ENCODE measurements at regions of chr15 and their contacts with region 1.

Region 1: GRCh38 chr15:80776420-80777045 is 2.6 kb upstream of the CEMIP start:
- DNase-seq: peak; percentile 84
- H3K4me3 ChIP-seq: no peak overlapping the region
- H3K27ac ChIP-seq: peak overlapping the region; percentile 66
- H3K4me1 ChIP-seq: peaks cover 11% of the 10 kb centered on the region
- H3K27me3 ChIP-seq: peaks cover 17% of the 10 kb centered on the region
- CTCF ChIP-seq: peak; percentile 84

Region 2: GRCh38 chr15:80567721-80568157 is 208.8 kb before region 1 on chr15:
- intact Hi-C with region 1: loop called (anchors 2 kb)
- DNase-seq: peak; percentile 71
- H3K4me3 ChIP-seq: no peak overlapping the region
- H3K27ac ChIP-seq: no peak overlapping the region
- H3K4me1 ChIP-seq: no peaks in the 10 kb centered on the region
- H3K27me3 ChIP-seq: no peaks in the 10 kb centered on the region
- CTCF ChIP-seq: peak; percentile 56

Region 3: DNA sequence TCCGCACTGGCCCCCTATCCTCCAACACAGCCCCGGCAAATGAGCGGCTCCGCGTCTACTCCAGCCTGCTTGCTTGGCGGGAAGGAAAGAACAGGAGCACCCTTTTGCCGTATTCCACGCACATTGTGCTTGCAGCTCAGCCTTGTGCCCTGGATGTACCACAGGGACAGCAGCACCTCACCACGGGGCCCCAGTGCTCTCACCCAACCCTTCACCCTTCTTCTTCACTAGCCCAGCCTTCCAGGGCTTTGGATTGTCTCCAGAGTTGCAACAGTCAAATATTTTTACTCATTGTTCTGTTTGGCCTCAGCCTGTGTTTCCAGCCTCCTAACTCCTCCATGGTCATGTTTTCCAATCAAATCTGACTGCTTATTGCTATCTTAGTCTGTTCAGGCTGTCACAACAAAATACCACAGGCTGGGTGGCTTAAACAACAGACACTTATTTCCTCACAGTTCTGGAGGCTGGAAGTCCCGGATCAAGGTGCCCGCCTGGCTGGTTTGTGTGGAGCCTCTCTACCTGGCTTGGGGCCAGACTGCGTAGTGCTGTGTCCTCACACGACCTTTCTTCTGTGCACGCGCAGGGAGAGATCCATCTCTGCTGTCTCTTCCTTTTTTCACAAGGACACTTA is 160.7 kb before region 1 on chr15:
- intact Hi-C with region 1: loop called (anchors 10 kb)
- DNase-seq: peak; percentile 73
- H3K4me3 ChIP-seq: no peak overlapping the region
- H3K27ac ChIP-seq: no peak overlapping the region
- H3K4me1 ChIP-seq: no peaks in the 10 kb centered on the region
- H3K27me3 ChIP-seq: no peaks in the 10 kb centered on the region
- CTCF ChIP-seq: no peak

Region 4: DNA sequence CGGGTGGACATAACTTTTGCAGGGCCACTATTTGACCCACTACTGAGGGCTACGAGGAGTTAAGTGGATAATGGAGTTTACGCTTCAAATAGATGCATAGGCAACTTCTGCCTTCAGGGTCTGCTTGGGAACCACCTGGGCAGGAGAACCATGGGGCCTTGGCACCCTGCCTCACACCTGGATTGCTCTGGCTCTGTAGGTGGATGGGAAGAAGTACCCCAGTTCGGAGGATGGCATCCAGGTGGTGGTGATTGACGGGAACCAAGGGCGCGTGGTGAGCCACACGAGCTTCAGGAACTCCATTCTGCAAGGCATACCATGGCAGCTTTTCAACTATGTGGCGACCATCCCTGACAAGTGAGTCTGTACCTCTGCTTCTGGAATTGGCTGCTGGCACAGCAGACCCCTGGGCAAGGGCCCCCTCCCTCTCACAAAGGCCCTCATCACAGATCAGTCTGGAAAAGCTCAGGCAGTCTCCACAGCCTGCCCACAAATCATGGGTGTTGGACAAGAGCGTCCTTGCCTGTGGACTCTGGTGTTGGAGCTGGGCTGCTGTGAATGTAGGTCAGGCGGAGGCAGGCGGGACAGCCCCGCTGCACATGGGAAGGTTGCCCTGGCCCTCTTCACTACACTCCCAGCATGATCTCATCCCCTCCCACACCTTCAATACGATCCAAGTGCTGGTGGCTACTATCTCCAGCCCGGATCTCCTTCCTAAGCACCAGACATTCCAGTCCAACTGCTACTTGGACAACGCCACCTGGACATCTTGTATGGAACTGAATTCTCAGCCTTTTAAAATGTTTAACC is 166.4 kb after region 1 on chr15:
- intact Hi-C with region 1: no loop called
- DNase-seq: no peak
- H3K4me3 ChIP-seq: no peak overlapping the region
- H3K27ac ChIP-seq: no peak overlapping the region
- H3K4me1 ChIP-seq: no peaks in the 10 kb centered on the region
- H3K27me3 ChIP-seq: no peaks in the 10 kb centered on the region
- CTCF ChIP-seq: no peak

Measured in colonic mucosa (tissue), 4 donors.